ENCODE measurements at regions of chr15 and their contacts with region 1.

Region 1: DNA sequence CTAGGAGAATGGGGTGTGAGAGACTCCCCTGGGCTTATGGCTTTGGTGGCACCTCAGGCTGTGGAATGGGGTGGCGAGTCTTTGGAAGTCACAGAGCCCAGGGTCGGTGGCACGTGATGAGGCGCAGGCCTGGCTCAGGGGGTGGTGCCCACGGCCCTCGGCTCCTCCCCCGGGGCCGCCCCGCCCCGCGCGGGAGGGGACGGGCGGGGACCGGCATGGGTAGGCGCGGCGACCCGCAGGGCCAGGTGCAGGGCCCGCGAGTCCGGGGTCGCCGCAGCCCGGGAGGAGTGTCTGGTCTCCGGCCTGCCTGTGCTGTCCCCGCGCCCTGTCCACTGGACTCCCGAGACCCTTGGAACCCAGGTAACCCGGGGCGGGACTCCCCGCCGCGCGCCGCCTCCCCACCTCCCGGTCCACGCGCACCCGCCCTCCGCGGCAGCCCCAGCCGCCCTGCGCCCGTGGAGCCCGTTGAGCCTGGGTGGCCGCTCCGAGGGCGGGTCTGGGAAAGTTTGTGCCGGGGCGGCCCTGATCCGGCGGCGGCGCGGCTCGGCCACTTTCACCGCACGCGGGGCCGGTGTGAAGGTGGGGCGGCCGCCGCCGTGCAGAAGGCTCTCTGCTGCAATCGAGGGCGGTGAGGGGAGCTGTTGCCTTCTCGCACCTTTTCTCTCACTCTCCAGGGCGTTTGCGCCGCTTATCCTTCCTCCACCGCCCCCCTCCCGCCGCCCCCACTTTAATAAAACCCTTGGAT is at the start of gene PAQR5:
- DNase-seq: peak; percentile 75
- H3K4me3 ChIP-seq: peak within 1 kb of the TSS; percentile 37 to 59 (median 50)
- H3K27ac ChIP-seq: peak within 1 kb of the TSS; percentile 67 to 82 (median 76)
- H3K4me1 ChIP-seq: peaks cover 0 to 28% (median 20%) of the 10 kb centered on the region in 4 donors
- H3K27me3 ChIP-seq: peaks cover 18% of the 10 kb centered on the region
- CTCF ChIP-seq: no peak
- EP300 ChIP-seq: no peak
- POLR2A ChIP-seq: peak; percentile 43
- total RNA-seq, gene PAQR5: 21.1 to 80.0 (median 48.9) TPM

Region 2: GRCh38 chr15:69090197-69090948 is 208.5 kb before region 1 on chr15:
- in situ Hi-C with region 1: no loop called
- intact Hi-C with region 1: no loop called
- DNase-seq: no peak
- H3K4me3 ChIP-seq: no peak overlapping the region
- H3K27ac ChIP-seq: no peak overlapping the region
- H3K4me1 ChIP-seq: no peaks in the 10 kb centered on the region
- H3K27me3 ChIP-seq: peaks cover 4% of the 10 kb centered on the region
- CTCF ChIP-seq: no peak
- EP300 ChIP-seq: no peak
- POLR2A ChIP-seq: no peak

Region 3: GRCh38 chr15:69373406-69373805 is 74.5 kb after region 1 on chr15:
- in situ Hi-C with region 1: no loop called
- intact Hi-C with region 1: loop called (anchors 2 kb)
- DNase-seq: no peak
- H3K4me3 ChIP-seq: no peak overlapping the region
- H3K27ac ChIP-seq: no peak overlapping the region
- H3K4me1 ChIP-seq: no peaks in the 10 kb centered on the region
- H3K27me3 ChIP-seq: no peaks in the 10 kb centered on the region
- CTCF ChIP-seq: no peak
- EP300 ChIP-seq: no peak
- POLR2A ChIP-seq: no peak

Measured in transverse colon (tissue), 4 donors.